Activated T-helper 1 cell treated with anti-CD3 and anti-CD28 coated beads, Interleukin-12 subunit alpha, Interleukin-12 subunit beta, Interleukin-2, Interleukin-4 antibody, amounts not matched to agents 30 ng/mL and 10 ng/mL and 1 ng/mL, durations not matched to agents 14 hours and 24 hours and 36 hours (primary cell): ENCODE measurements at regions of chr1 and their contacts with region 1.

Region 1: GRCh38 chr1:26864610-26865527 is 1.9 kb downstream of the SFN start:
- DNase-seq: peak; percentile 96
- H3K4me3 Mint-ChIP-seq: peak overlapping the region; percentile 98
- H3K27ac Mint-ChIP-seq: peak overlapping the region; percentile 98
- H3K4me1 Mint-ChIP-seq: peaks cover 32% of the 10 kb centered on the region
- H3K27me3 Mint-ChIP-seq: no peaks in the 10 kb centered on the region

Region 2: GRCh38 chr1:26500488-26501175 is 364.2 kb before region 1 on chr1:
- intact Hi-C with region 1: loop called (anchors 1 kb)
- DNase-seq: peak; percentile 84
- H3K4me3 Mint-ChIP-seq: peak overlapping the region; percentile 90
- H3K27ac Mint-ChIP-seq: peak overlapping the region; percentile 91
- H3K4me1 Mint-ChIP-seq: peaks cover 18% of the 10 kb centered on the region
- H3K27me3 Mint-ChIP-seq: no peaks in the 10 kb centered on the region

Region 3: DNA sequence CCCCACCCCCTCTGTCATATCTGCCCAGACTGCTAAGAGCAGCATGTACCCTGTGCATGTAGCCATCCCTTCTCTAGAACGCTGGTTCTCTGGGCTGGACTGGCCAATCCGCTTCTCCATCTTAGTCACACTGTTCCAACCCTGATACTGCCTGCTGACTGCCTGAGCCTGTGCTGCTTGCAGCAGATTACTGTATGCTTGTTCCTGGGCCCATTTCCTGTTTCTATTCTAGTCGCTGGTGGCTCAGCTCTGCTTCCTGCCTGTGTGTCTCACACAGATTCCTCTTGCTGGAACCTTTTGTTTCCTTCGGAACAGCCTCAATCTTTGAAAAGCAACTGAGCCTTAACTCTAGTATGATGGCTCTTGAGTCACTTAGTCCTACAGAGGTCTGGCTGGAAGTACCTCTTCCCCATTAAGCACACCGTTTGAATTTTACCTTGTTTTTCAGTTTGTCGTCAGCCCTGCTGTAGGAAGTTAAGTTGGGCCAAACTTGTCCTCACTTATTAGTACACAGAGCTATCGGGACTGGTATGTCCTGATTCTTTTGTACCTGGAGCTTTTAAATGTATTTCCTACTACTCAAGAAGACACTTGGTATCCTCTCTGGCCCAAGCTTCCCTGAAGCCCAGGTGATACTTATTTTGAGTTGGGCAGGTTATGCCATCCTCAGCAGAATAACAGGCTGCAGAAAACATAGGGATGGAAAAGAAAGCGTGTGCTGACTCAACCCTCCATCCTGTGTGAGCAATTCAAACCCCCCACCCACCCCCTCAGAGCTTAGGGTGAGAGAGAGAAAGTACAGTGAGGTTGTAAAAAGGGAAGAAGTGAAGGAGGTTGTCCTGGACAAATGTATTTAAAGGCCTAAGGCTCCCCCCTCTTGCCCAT is 120.6 kb before region 1 on chr1:
- intact Hi-C with region 1: loop called (anchors 1 kb)
- DNase-seq: peak; percentile 84
- H3K4me3 Mint-ChIP-seq: peak overlapping the region; percentile 73
- H3K27ac Mint-ChIP-seq: peak overlapping the region; percentile 93
- H3K4me1 Mint-ChIP-seq: peaks cover 77% of the 10 kb centered on the region
- H3K27me3 Mint-ChIP-seq: no peaks in the 10 kb centered on the region

Region 4: GRCh38 chr1:26853156-26853555 is 11.7 kb before region 1 on chr1:
- intact Hi-C with region 1: loop called (anchors 1 kb)
- DNase-seq: peak; percentile 53
- H3K4me3 Mint-ChIP-seq: no peak overlapping the region
- H3K27ac Mint-ChIP-seq: no peak overlapping the region
- H3K4me1 Mint-ChIP-seq: no peaks in the 10 kb centered on the region
- H3K27me3 Mint-ChIP-seq: no peaks in the 10 kb centered on the region

Region 5: DNA sequence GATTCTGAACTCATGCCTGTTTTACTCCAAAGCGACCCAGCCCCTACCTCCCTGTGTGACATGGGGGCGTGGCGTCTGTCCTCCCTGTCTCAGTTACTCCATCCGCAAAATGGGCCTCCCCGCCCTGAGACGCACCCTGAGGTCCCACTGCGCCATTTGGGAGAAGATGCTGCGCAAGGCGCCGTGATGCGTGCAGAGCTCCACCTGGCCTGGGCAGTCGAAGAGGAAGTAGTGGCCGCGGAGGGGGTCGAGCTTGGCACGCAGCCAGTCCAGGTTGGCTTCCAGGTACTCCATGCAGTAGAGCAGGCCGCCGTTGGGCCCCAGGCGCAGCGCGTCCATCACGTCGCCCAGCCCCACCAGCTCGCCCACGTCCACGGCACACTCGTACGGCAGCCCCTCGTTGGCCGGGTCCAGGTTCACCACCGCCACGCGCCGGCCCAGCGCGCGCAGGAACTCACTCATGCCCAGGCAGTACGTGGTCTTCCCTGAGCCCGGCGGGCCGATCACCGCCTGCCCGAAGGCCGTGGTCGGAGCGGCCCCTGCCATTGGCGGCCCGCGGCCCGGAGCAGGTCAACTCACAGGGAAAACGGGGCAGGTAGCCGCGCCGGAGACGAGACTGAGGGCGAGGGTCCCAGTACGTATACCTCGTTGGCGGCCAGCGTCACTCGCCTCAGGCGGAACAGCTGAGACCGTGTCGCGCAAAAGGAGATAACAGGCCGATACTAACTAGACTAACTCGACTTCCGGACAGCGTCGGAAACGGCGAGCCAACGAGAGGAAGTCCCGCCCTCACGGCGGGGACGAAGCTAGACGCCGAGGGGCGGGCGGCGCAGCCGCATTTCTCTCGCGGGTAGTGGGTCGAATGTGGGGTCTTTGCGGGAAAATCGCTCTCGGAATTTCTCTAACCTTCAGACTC is 24.9 kb after region 1 on chr1 and contains the start of gene GPN2:
- intact Hi-C with region 1: loop called (anchors 1 kb)
- DNase-seq: peak; percentile 80
- H3K4me3 Mint-ChIP-seq: peak within 1 kb of the TSS; percentile 99
- H3K27ac Mint-ChIP-seq: peak within 1 kb of the TSS; percentile 95
- H3K4me1 Mint-ChIP-seq: peaks cover 26% of the 10 kb centered on the region
- H3K27me3 Mint-ChIP-seq: no peaks in the 10 kb centered on the region
- total RNA-seq, gene GPN2: 46.4 and 51.9 TPM in 2 replicates

Region 6: DNA sequence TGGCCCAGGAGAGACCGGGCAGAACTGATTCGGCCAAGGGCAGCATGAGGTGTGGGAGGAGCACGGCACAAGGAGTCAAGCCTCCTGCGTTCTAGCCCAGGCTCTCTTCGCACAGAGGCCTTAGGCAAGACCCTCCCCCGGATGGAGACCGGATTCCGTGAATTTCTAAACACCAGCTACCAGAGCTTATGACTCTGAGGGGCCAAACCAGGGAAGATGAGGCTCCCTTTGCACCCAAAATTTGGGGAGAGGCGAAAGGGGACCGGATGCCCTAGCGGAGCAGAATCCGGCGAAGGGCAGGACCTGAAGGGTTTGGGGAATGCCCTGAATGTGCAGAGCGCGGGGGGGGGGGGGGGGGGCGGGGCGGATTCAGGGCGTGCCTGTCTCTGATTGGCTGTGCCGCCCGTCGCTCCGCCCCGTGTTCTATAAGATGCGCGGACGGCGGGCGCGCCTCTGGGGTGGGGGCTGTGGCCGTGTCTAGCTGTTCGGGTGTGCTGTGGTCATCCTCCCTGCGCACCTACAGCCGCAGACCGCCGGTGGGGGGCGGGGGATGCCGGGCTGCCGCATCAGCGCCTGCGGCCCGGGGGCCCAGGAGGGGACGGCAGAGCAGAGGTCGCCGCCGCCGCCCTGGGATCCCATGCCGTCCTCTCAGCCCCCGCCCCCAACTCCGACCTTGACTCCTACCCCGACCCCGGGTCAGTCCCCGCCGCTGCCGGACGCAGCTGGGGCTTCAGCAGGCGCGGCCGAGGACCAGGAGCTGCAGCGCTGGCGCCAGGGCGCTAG is 128.6 kb after region 1 on chr1 and contains the start of gene TRNP1:
- intact Hi-C with region 1: loop called (anchors 1 kb)
- DNase-seq: peak; percentile 69
- H3K4me3 Mint-ChIP-seq: peak within 1 kb of the TSS; percentile 81
- H3K27ac Mint-ChIP-seq: peak within 1 kb of the TSS; percentile 21
- H3K4me1 Mint-ChIP-seq: peaks cover 21% of the 10 kb centered on the region
- H3K27me3 Mint-ChIP-seq: peaks cover 55% of the 10 kb centered on the region
- total RNA-seq, gene TRNP1: 2.0 TPM in 2 replicates